Psoas muscle (tissue), 8 donors: ENCODE measurements at regions of chr20 and their contacts with region 1.

Region 1: GRCh38 chr20:62793912-62794724 is 2.2 kb upstream of the MRGBP start:
- DNase-seq: peak; percentile 97 to 98
- ATAC-seq: peak; percentile 90 to 91 (median 90)
- H3K4me3 ChIP-seq: peak overlapping the region; percentile 70
- H3K27ac ChIP-seq: peak overlapping the region; percentile 81
- H3K4me1 ChIP-seq: peaks cover 16% of the 10 kb centered on the region
- H3K27me3 ChIP-seq: peaks cover 0 to 5% (median 0%) of the 10 kb centered on the region in 3 donors
- CTCF ChIP-seq: no peak

Region 2: GRCh38 chr20:62652051-62652926 is 141.8 kb before region 1 on chr20:
- intact Hi-C with region 1: loop called in 1 of 2 experiments (anchors 5 kb)
- DNase-seq: peak; percentile 94 to 97
- ATAC-seq: peak; percentile 66 to 81 (median 78)
- H3K4me3 ChIP-seq: peak overlapping the region; percentile 52
- H3K27ac ChIP-seq: peak overlapping the region; percentile 87
- H3K4me1 ChIP-seq: peaks cover 35% of the 10 kb centered on the region
- H3K27me3 ChIP-seq: no peaks in the 10 kb centered on the region
- CTCF ChIP-seq: no peak

Region 3: GRCh38 chr20:62668441-62669027 is 125.6 kb before region 1 on chr20:
- intact Hi-C with region 1: loop called (anchors 5 kb)
- DNase-seq: peak; percentile 65 to 77
- ATAC-seq: peak; percentile 72 to 87 (median 77)
- H3K4me3 ChIP-seq: no peak overlapping the region
- H3K27ac ChIP-seq: no peak overlapping the region
- H3K4me1 ChIP-seq: no peaks in the 10 kb centered on the region
- H3K27me3 ChIP-seq: peaks cover 0 to 4% (median 0%) of the 10 kb centered on the region in 3 donors
- CTCF ChIP-seq: peak; percentile 77

Region 4: GRCh38 chr20:62837800-62838454 is 43.8 kb after region 1 on chr20:
- intact Hi-C with region 1: no loop called
- DNase-seq: peak in 1 of 2 donors; percentile 50
- ATAC-seq: no peak
- H3K4me3 ChIP-seq: no peak overlapping the region
- H3K27ac ChIP-seq: no peak overlapping the region
- H3K4me1 ChIP-seq: no peaks in the 10 kb centered on the region
- H3K27me3 ChIP-seq: peaks cover 0 to 32% (median 6%) of the 10 kb centered on the region in 3 donors
- CTCF ChIP-seq: no peak